ENCODE measurements at regions of chr3 and their contacts with region 1.

Region 1: DNA sequence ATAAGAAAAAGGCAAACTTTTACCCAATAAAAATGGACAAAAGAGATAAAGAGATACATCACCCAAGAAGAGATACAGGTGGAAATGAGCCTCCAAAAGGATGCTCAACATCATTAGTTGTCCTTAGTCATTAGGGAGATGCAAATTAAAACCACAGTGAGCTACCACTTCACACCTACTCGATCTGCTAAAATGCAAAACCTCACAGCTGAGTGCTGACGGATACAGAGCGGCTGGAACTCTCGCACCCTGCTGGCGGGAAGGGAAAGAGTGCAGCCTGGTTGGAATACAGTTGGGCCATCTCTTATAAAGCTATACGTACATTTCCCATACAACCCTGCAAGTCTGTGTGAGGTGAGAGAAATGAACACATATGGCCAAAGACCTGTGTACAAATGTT is 78.5 kb upstream of the PRR20G start:
- DNase-seq: no peak
- H3K4me3 ChIP-seq: no peak overlapping the region
- H3K27ac ChIP-seq: no peak overlapping the region
- H3K4me1 ChIP-seq: peaks cover 0 to 9% (median 0%) of the 10 kb centered on the region in 4 experiments; a peak in 2 of 7 replicates
- H3K27me3 ChIP-seq: no peaks in the 10 kb centered on the region; a peak in 1 of 7 replicates
- CTCF ChIP-seq: peak in 2 of 3 experiments; percentile 46 to 51; a peak in 3 of 4 replicates
- EP300 ChIP-seq: no peak
- POLR2A ChIP-seq: no peak
- RAD21 ChIP-seq: peak; percentile 20 to 40; a peak in 3 of 4 replicates

Region 2: GRCh38 chr3:127339928-127340861 is 26.2 kb before region 1 on chr3:
- CTCF ChIA-PET with region 1: no interaction called
- POLR2A ChIA-PET with region 1: no interaction called
- DNase-seq: peak in 1 of 2 experiments; percentile 41
- H3K4me3 ChIP-seq: no peak overlapping the region
- H3K27ac ChIP-seq: no peak overlapping the region
- H3K4me1 ChIP-seq: no peaks in the 10 kb centered on the region
- H3K27me3 ChIP-seq: no peaks in the 10 kb centered on the region
- CTCF ChIP-seq: peak in 1 of 3 experiments; percentile 26; a peak in 1 of 4 replicates
- EP300 ChIP-seq: no peak
- POLR2A ChIP-seq: no peak
- RAD21 ChIP-seq: peak; percentile 22 to 48; a peak in 3 of 4 replicates

Region 3: DNA sequence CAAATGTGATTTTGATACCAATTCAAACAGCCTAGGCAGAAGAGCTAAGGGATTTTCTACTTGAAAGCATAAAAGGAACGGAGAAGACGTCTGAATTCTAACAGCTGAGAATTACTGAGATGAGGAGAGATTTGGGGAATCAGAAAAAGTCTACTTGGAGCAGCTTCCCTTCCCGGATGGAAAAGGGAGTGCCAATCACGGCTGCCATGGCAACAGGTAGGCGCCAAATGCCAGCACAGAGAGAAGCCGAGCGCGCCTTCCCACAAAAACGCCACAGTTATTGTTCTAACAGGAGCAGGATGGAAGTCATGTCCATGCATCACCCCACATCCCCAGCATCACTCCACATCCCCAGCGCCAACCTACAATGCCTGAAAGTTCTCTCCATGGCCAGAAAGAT is 15.1 kb before region 1 on chr3:
- CTCF ChIA-PET with region 1: interaction called, 11 read pairs
- POLR2A ChIA-PET with region 1: no interaction called
- DNase-seq: peak in 1 of 2 experiments; percentile 27
- H3K4me3 ChIP-seq: no peak overlapping the region
- H3K27ac ChIP-seq: no peak overlapping the region
- H3K4me1 ChIP-seq: peaks cover 0 to 5% (median 0%) of the 10 kb centered on the region in 4 experiments; a peak in 2 of 7 replicates
- H3K27me3 ChIP-seq: no peaks in the 10 kb centered on the region; a peak in 1 of 7 replicates
- CTCF ChIP-seq: no peak
- EP300 ChIP-seq: no peak
- POLR2A ChIP-seq: no peak
- RAD21 ChIP-seq: no peak

Region 4: GRCh38 chr3:127448161-127448561 is 81.8 kb after region 1 on chr3:
- CTCF ChIA-PET with region 1: no interaction called
- POLR2A ChIA-PET with region 1: no interaction called
- DNase-seq: no peak
- H3K4me3 ChIP-seq: no peak overlapping the region
- H3K27ac ChIP-seq: no peak overlapping the region
- H3K4me1 ChIP-seq: no peaks in the 10 kb centered on the region
- H3K27me3 ChIP-seq: no peaks in the 10 kb centered on the region; a peak in 2 of 7 replicates
- CTCF ChIP-seq: no peak
- EP300 ChIP-seq: no peak
- POLR2A ChIP-seq: no peak
- RAD21 ChIP-seq: peak in 1 of 2 experiments; percentile 5; a peak in 1 of 4 replicates